ENCODE measurements at regions of chr13 and their contacts with region 1.

Region 1: GRCh38 chr13:99442273-99442895 is 58.9 kb upstream of the TM9SF2 start:
- DNase-seq: peak in 1 of 5 donors; percentile 50
- H3K4me3 ChIP-seq: no peak overlapping the region
- H3K27ac ChIP-seq: no peak overlapping the region
- H3K4me1 ChIP-seq: no peaks in the 10 kb centered on the region
- H3K27me3 ChIP-seq: no peaks in the 10 kb centered on the region
- CTCF ChIP-seq: peak; percentile 69 to 78 (median 72)
- EP300 ChIP-seq: no peak
- POLR2A ChIP-seq: no peak

Region 2: DNA sequence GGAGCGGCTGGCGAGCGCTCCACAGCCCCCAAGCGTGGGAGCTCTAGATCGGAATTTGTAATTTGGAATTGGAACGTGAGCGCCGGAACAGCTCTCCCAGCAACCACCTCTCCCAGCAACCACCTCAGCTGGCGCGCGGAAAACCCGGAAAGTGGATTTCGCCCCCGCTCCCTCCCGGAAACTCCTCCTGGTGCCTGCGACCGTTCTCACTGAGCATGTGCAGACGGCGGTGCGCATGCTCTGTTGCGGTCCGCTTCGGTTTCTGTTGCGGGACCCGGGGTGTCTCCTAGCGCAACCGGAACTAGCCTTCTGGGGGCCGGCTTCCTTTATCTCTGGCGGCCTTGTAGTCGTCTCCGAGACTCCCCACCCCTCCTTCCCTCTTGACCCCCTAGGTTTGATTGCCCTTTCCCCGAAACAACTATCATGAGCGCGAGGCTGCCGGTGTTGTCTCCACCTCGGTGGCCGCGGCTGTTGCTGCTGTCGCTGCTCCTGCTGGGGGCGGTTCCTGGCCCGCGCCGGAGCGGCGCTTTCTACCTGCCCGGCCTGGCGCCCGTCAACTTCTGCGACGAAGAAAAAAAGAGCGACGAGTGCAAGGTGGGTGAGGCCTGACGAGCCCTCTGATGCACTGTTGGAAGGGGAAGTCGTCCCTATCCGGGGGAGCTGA is 58.9 kb after region 1 on chr13 and contains the start of gene TM9SF2:
- intact Hi-C with region 1: loop called in 1 of 4 experiments (anchors 10 kb)
- DNase-seq: peak; percentile 97 to 99 (median 98)
- H3K4me3 ChIP-seq: peak within 1 kb of the TSS; percentile 94
- H3K27ac ChIP-seq: no peak within 1 kb of the TSS
- H3K4me1 ChIP-seq: peaks cover 5% of the 10 kb centered on the region
- H3K27me3 ChIP-seq: no peaks in the 10 kb centered on the region
- CTCF ChIP-seq: no peak
- EP300 ChIP-seq: no peak
- POLR2A ChIP-seq: peak; percentile 68
- total RNA-seq, gene TM9SF2: 57.7 to 93.3 (median 70.6) TPM

Region 3: GRCh38 chr13:99516153-99516929 is 74.0 kb after region 1 on chr13:
- intact Hi-C with region 1: no loop called
- DNase-seq: no peak
- H3K4me3 ChIP-seq: no peak overlapping the region
- H3K27ac ChIP-seq: no peak overlapping the region
- H3K4me1 ChIP-seq: peaks cover 4% of the 10 kb centered on the region
- H3K27me3 ChIP-seq: no peaks in the 10 kb centered on the region
- CTCF ChIP-seq: no peak
- EP300 ChIP-seq: no peak
- POLR2A ChIP-seq: no peak

Region 4: GRCh38 chr13:99606324-99607066 is 164.1 kb after region 1 on chr13:
- intact Hi-C with region 1: loop called in 1 of 4 experiments (anchors 10 kb)
- DNase-seq: peak; percentile 84 to 93 (median 93)
- H3K4me3 ChIP-seq: peak within 1 kb of the TSS; percentile 83
- H3K27ac ChIP-seq: peak within 1 kb of the TSS in 1 of 2 donors; percentile 43
- H3K4me1 ChIP-seq: no peaks in the 10 kb centered on the region
- H3K27me3 ChIP-seq: no peaks in the 10 kb centered on the region
- CTCF ChIP-seq: peak in 1 of 3 donors; percentile 31
- EP300 ChIP-seq: no peak
- POLR2A ChIP-seq: peak; percentile 49